BJ (cell line): ENCODE measurements at regions of chr2 and their contacts with region 1.

Region 1: GRCh38 chr2:55771612-55772011 is 78.0 kb upstream of the PNPT1 start:
- DNase-seq: no peak
- H3K4me3 ChIP-seq: no peak overlapping the region
- H3K27me3 ChIP-seq: no peaks in the 10 kb centered on the region
- CTCF ChIP-seq: peak; percentile 55

Region 2: DNA sequence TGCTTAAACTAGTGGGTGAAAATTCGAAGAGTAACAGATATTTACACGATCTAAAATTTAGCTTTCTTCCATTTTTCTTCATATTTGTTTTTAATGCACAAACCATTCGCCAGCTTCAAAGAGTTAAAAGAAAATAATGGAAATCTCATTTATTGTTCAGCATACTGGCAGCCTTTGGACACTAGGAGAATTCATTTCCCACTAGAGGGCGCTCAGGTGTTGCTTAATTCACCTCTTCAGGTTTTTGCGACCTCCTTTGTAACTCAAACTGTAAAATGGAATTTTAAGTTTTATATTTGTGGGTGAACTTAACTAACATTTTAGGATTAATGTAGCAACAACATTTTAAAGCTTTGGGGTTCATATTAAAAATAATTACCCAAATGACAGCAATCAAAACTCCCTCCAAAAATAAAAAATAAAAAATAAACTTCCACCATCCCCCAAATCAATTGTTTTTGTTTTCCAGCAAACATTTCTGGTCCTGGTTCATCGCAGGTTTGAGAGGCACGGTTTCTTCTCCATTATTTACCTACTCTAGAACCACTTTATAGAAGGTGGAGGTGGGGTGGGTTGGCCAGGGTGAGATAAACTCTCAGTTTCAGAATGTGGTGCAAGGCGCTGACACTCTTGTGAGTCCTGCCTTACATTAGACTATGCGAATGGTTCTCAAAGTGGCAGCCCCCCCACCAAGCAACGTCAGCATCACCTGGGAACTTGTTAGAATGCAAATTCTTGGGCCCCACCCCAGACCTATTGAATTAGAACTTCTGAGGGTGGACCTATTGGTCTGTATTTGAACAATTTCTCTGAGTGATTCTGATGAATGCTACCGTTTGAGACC is 53.2 kb before region 1 on chr2:
- CTCF ChIA-PET with region 1: interaction called, 23 read pairs
- POLR2A ChIA-PET with region 1: no interaction called
- DNase-seq: no peak
- H3K4me3 ChIP-seq: no peak overlapping the region
- H3K27me3 ChIP-seq: no peaks in the 10 kb centered on the region
- CTCF ChIP-seq: peak; percentile 73

Region 3: GRCh38 chr2:55743583-55743982 is 28.0 kb before region 1 on chr2:
- CTCF ChIA-PET with region 1: no interaction called
- POLR2A ChIA-PET with region 1: no interaction called
- DNase-seq: peak; percentile 56
- H3K4me3 ChIP-seq: no peak overlapping the region
- H3K27me3 ChIP-seq: no peaks in the 10 kb centered on the region
- CTCF ChIP-seq: no peak

Region 4: GRCh38 chr2:55801436-55801835 is 29.8 kb after region 1 on chr2:
- CTCF ChIA-PET with region 1: no interaction called
- POLR2A ChIA-PET with region 1: no interaction called
- DNase-seq: no peak
- H3K4me3 ChIP-seq: no peak overlapping the region
- H3K27me3 ChIP-seq: no peaks in the 10 kb centered on the region
- CTCF ChIP-seq: no peak

Region 5: GRCh38 chr2:55843096-55843993 is 71.7 kb after region 1 on chr2:
- CTCF ChIA-PET with region 1: interaction called, 6 read pairs
- POLR2A ChIA-PET with region 1: interaction called, 10 read pairs
- DNase-seq: peak; percentile 100
- H3K4me3 ChIP-seq: no peak overlapping the region
- H3K27me3 ChIP-seq: no peaks in the 10 kb centered on the region
- CTCF ChIP-seq: no peak

Region 6: DNA sequence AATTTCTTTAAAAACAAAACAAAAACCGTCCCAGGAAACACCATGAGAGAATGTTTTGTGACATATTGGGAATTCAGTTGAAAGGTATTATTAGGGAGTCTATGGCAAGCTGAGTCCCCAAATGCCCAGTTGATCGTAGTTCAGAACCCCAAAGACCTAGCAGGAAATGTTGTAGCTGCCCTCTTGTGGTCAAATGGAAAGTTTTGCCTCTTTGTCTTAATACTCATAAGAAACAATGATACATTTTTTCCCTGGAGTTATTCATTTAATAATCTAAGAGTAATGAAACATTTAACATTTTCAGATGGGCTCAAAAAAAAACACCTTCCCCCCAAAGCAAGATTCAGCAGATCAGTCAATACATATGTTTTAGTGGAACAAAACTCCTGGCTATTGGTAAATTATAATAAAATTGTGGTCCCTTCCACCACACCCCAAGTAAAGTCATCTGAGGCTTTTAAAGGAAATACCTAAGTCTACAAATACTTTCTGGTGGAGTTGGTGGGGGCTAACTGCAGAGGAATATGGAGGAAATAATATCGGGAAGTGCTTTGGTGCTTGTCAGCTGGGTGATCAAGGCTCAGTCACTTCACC is 189.8 kb after region 1 on chr2:
- CTCF ChIA-PET with region 1: interaction called, 43 read pairs
- POLR2A ChIA-PET with region 1: no interaction called
- DNase-seq: no peak
- H3K4me3 ChIP-seq: no peak overlapping the region
- H3K27me3 ChIP-seq: no peaks in the 10 kb centered on the region
- CTCF ChIP-seq: peak; percentile 66

Region 7: DNA sequence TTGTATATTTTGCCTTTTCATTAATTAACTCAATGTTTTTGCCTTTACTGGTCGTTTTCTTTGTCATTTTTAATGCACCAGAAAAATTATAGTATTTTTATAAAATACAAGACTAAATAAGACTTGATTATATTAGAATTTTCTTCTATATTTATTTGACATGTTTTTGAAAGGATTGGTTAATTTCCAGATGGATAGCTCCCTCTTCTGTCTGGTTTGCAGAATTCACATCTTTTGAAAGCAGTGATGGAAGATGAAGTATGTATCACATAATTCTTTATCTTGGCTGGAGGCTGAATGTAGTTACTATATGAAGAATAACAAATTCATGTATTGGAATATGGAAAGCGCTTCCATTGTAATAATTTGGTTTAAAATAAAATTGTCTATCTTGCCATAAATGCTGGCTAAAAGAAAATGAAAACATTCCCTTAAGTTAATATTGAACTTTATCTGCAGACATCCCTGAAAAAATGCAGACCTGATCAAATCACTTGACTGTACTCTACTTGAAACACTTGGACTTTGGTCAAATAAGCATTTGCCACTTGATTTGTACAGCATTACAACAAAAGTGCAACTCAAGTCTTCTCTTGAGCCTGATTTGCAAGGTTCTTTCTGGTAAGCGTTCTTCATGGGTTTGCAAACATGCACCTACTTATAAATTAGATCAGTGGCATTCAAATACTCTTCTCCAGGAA is 238.3 kb after region 1 on chr2:
- CTCF ChIA-PET with region 1: interaction called, 20 read pairs
- POLR2A ChIA-PET with region 1: no interaction called
- DNase-seq: no peak
- H3K4me3 ChIP-seq: no peak overlapping the region
- H3K27me3 ChIP-seq: no peaks in the 10 kb centered on the region
- CTCF ChIP-seq: peak; percentile 61